Activated T-helper 1 cell treated with anti-CD3 and anti-CD28 coated beads, Interleukin-12 subunit alpha, Interleukin-12 subunit beta, Interleukin-2, Interleukin-4 antibody, amounts not matched to agents 30 ng/mL and 10 ng/mL and 1 ng/mL, durations not matched to agents 14 hours and 24 hours and 36 hours (primary cell): ENCODE measurements at regions of chr5 and their contacts with region 1.

Region 1: DNA sequence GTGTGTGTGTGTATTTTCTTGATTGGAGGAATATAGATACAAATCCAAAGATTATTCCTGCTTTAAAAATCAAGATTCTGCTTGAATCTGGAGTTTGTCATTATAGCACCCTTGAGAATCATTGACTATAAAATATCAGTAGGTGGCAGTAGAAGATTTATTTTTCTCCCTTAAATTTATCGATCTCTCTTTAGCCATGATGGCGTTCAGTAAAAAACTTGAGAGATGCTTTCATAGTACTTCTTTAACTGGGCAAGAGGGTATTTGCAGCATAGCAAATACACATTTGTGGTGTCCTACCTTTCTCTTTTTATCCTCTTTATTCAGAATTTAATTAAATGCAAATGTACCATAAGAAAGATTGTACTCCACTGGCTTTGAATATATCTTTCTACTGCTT is 307.7 kb downstream of the ADGRV1 start:
- DNase-seq: no peak
- H3K4me3 Mint-ChIP-seq: no peak overlapping the region
- H3K27ac Mint-ChIP-seq: no peak overlapping the region
- H3K4me1 Mint-ChIP-seq: no peaks in the 10 kb centered on the region
- H3K27me3 Mint-ChIP-seq: peaks cover 5% of the 10 kb centered on the region

Region 2: DNA sequence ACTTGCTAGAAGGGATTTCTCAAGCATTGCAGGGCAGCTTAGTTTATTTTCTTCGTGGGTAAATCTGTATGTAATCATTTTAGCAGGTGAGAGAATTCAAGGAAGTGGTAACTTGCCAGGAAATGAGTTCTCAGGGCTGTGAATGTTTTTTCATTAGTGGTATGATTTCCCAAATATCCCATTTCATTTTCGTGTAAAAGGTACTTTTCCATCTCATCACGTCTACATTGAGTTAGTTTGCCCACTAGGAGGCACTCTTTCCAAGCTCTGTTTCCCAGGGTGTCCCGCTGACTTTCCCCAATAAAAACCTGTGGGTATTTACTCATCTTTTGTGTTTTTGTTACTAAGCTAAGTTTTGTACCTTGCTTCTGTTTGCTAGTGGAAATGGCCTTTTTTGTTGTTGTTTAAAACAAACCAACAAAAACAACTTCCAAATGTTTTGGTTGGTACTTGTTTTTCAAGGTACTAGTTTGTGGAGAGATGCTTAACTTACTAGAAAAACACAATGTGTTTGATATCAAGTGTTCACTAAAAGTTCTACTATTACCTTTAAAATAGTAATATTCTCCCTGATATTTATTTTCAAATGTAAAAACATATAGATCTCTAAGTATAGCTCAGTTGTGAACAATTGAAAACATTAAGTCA is 65.8 kb after region 1 on chr5:
- intact Hi-C with region 1: loop called (anchors 2 kb)
- DNase-seq: no peak
- H3K4me3 Mint-ChIP-seq: no peak overlapping the region
- H3K27ac Mint-ChIP-seq: no peak overlapping the region
- H3K4me1 Mint-ChIP-seq: peaks cover 5% of the 10 kb centered on the region
- H3K27me3 Mint-ChIP-seq: peaks cover 6% of the 10 kb centered on the region

Region 3: GRCh38 chr5:91101600-91102379 is 235.5 kb after region 1 on chr5:
- intact Hi-C with region 1: loop called (anchors 2 kb)
- DNase-seq: peak; percentile 25
- H3K4me3 Mint-ChIP-seq: no peak overlapping the region
- H3K27ac Mint-ChIP-seq: no peak overlapping the region
- H3K4me1 Mint-ChIP-seq: no peaks in the 10 kb centered on the region
- H3K27me3 Mint-ChIP-seq: peaks cover 12% of the 10 kb centered on the region

Region 4: DNA sequence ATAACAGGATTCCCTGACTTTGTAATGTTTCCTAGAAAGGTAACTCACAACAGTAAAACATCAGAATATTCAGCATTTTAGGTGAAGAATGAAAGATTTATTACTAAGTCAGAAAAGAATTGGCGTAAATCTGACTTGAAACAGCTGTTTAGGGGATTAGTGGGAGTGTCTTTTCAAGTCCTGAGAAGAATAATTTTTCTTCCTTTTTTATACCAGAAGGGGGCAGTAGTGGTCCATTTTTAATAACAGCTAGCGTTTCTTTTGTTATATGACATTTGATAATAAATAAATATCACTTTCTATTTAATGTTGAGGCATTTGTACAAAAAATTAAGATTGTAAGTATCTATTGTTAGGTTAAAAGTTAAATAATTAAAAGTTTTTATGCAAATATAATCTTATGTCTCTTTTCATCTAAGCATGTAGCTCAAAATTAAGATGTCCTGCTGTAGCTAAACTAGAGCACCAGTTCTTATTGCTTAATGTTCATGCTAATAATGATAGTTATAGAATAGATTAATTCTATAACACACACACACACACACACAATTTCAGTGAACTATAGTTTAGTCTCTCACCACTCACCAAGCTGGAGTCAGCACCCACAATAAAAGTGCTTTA is 775.5 kb after region 1 on chr5:
- intact Hi-C with region 1: loop called (anchors 5 kb)
- DNase-seq: no peak
- H3K4me3 Mint-ChIP-seq: no peak overlapping the region
- H3K27ac Mint-ChIP-seq: no peak overlapping the region
- H3K4me1 Mint-ChIP-seq: no peaks in the 10 kb centered on the region
- H3K27me3 Mint-ChIP-seq: peaks cover 2% of the 10 kb centered on the region